WTC11 (cell line): ENCODE measurements at regions of chr9 and their contacts with region 1.

Region 1: GRCh38 chr9:133992780-133993634 is 883 bp upstream of the VAV2 start:
- DNase-seq: peak; percentile 66
- ATAC-seq: peak; percentile 49
- H3K4me3 Mint-ChIP-seq: peak overlapping the region; percentile 64
- H3K27ac Mint-ChIP-seq: no peak overlapping the region
- H3K4me1 Mint-ChIP-seq: peaks cover 26% of the 10 kb centered on the region
- H3K27me3 Mint-ChIP-seq: no peaks in the 10 kb centered on the region
- CTCF ChIP-seq: no peak

Region 2: GRCh38 chr9:133742849-133743444 is 250.1 kb before region 1 on chr9:
- CTCF ChIA-PET with region 1: interaction called, 27 read pairs
- POLR2A ChIA-PET with region 1: no interaction called
- DNase-seq: peak; percentile 96
- ATAC-seq: peak; percentile 93
- H3K4me3 Mint-ChIP-seq: no peak overlapping the region
- H3K27ac Mint-ChIP-seq: no peak overlapping the region
- H3K4me1 Mint-ChIP-seq: peaks cover under 1% of the 10 kb centered on the region; the same call in 1 of the 2 replicates
- H3K27me3 Mint-ChIP-seq: peaks cover 7% of the 10 kb centered on the region
- CTCF ChIP-seq: peak; percentile 100

Region 3: GRCh38 chr9:133787754-133788025 is 205.3 kb before region 1 on chr9:
- CTCF ChIA-PET with region 1: interaction called, 80 read pairs
- POLR2A ChIA-PET with region 1: no interaction called
- DNase-seq: peak; percentile 73
- ATAC-seq: peak; percentile 98
- H3K4me3 Mint-ChIP-seq: no peak overlapping the region
- H3K27ac Mint-ChIP-seq: no peak overlapping the region
- H3K4me1 Mint-ChIP-seq: no peaks in the 10 kb centered on the region
- H3K27me3 Mint-ChIP-seq: no peaks in the 10 kb centered on the region
- CTCF ChIP-seq: no peak

Region 4: GRCh38 chr9:133825555-133826208 is 167.3 kb before region 1 on chr9:
- CTCF ChIA-PET with region 1: interaction called, 16 read pairs
- POLR2A ChIA-PET with region 1: no interaction called
- DNase-seq: no peak
- ATAC-seq: no peak
- H3K4me3 Mint-ChIP-seq: no peak overlapping the region
- H3K27ac Mint-ChIP-seq: peak overlapping the region; percentile 91
- H3K4me1 Mint-ChIP-seq: peaks cover 47% of the 10 kb centered on the region
- H3K27me3 Mint-ChIP-seq: no peaks in the 10 kb centered on the region
- CTCF ChIP-seq: no peak

Region 5: DNA sequence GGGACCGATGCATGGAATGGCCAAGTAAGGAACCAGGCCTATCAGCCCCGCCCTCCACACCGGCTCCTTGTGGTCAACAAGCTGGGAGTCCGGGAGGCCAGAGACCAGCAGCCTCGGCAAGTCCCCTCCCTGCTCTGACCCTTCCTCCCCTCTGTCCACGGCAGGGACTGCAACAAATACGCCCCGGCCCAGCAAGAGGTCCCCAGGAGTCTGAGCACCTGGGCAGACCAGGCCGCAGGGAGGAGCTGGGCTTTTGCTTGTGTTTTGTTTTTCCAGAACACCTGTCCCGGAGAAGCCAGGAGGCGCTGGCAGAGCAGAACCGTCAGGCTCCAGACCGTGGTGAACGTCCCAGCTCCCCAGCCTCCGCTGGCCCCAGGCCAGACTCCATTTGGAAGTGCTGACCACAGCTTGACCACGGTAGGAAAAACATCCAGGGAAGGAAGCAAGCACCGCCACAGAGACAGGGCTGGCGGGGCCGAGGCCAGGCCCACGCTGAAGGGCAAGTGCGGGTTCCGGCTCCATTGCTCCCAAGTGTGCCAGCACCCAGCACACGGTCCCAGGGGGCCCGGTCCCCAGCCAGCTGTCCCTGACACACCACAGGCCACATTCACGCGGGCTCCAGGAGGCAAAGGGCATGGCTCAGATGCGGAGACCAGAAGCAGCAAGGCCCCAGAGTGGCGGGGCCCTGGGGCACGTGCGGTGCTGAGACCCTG is 57.5 kb before region 1 on chr9:
- CTCF ChIA-PET with region 1: interaction called, 17 read pairs
- POLR2A ChIA-PET with region 1: no interaction called
- DNase-seq: no peak
- ATAC-seq: no peak
- H3K4me3 Mint-ChIP-seq: no peak overlapping the region
- H3K27ac Mint-ChIP-seq: no peak overlapping the region
- H3K4me1 Mint-ChIP-seq: peaks cover 17% of the 10 kb centered on the region
- H3K27me3 Mint-ChIP-seq: no peaks in the 10 kb centered on the region
- CTCF ChIP-seq: no peak

Region 6: GRCh38 chr9:134024828-134025605 is 32.0 kb after region 1 on chr9 and contains the start of gene BRD3OS:
- CTCF ChIA-PET with region 1: interaction called, 21 read pairs
- POLR2A ChIA-PET with region 1: no interaction called
- DNase-seq: peak; percentile 95
- ATAC-seq: peak; percentile 96
- H3K4me3 Mint-ChIP-seq: peak within 1 kb of the TSS; percentile 68
- H3K27ac Mint-ChIP-seq: no peak within 1 kb of the TSS
- H3K4me1 Mint-ChIP-seq: peaks cover 10% of the 10 kb centered on the region; the same call in 1 of the 2 replicates
- H3K27me3 Mint-ChIP-seq: no peaks in the 10 kb centered on the region
- CTCF ChIP-seq: no peak
- total RNA-seq, gene BRD3OS: 16.2 to 16.9 TPM (median 16.6 TPM) in 3 replicates

Region 7: DNA sequence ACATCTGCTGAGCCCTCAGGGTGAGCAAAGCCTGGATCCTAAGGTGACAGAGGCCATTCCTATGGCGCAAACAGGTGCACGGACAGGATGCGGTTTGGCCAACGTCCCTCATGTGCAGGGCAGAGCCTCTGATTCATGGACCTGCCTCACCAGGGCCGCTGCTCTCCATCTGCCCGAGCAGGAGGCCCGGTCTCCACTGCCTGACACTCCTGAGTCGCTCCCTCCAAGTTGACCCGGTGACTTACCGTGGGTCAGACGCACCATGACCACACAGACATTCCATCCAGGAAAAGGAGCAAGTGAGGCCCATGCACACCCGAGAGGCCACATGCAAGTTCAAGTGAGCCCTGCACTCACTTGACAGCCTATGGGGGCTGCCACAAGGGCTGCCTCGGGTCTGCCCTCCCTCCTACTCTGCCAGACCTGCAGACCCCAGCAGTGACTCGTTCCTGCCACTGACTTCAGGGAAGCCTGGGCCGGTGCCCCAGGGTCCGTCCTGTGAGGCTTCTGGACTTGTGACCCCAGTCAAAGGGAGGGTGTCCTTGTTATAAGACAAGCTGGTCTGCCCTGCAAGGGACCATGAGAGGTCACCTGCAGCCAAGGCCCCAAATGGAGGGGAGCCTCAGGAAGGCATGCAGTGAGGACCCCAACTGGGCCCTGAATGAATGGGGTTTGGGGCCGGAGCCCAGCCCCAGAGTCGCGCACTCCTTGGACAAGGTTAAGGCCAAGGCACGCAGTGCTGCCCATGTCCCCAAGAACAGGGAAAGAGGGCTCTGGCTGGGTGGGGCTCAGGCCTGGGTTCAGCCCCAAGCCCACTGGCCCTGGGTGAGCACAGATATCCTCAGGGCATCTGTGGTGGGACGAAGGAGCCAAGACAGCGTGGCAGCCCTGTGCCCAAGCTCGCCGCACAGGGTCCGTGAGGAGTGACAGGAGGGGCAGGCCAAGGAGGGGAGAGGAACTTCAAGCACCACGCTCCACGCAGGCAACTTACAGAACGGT is 42.3 kb after region 1 on chr9:
- CTCF ChIA-PET with region 1: no interaction called
- POLR2A ChIA-PET with region 1: no interaction called
- DNase-seq: no peak
- ATAC-seq: no peak
- H3K4me3 Mint-ChIP-seq: no peak overlapping the region
- H3K27ac Mint-ChIP-seq: no peak overlapping the region
- H3K4me1 Mint-ChIP-seq: no peaks in the 10 kb centered on the region
- H3K27me3 Mint-ChIP-seq: no peaks in the 10 kb centered on the region
- CTCF ChIP-seq: no peak

Region 8: GRCh38 chr9:134088063-134088725 is 95.2 kb after region 1 on chr9:
- CTCF ChIA-PET with region 1: no interaction called
- POLR2A ChIA-PET with region 1: no interaction called
- DNase-seq: no peak
- ATAC-seq: no peak
- H3K4me3 Mint-ChIP-seq: no peak overlapping the region
- H3K27ac Mint-ChIP-seq: no peak overlapping the region
- H3K4me1 Mint-ChIP-seq: peaks cover 3% of the 10 kb centered on the region
- H3K27me3 Mint-ChIP-seq: peaks cover 6% of the 10 kb centered on the region
- CTCF ChIP-seq: no peak